Tibial artery (tissue), 4 donors: ENCODE measurements at regions of chr3 and their contacts with region 1.

Region 1: DNA sequence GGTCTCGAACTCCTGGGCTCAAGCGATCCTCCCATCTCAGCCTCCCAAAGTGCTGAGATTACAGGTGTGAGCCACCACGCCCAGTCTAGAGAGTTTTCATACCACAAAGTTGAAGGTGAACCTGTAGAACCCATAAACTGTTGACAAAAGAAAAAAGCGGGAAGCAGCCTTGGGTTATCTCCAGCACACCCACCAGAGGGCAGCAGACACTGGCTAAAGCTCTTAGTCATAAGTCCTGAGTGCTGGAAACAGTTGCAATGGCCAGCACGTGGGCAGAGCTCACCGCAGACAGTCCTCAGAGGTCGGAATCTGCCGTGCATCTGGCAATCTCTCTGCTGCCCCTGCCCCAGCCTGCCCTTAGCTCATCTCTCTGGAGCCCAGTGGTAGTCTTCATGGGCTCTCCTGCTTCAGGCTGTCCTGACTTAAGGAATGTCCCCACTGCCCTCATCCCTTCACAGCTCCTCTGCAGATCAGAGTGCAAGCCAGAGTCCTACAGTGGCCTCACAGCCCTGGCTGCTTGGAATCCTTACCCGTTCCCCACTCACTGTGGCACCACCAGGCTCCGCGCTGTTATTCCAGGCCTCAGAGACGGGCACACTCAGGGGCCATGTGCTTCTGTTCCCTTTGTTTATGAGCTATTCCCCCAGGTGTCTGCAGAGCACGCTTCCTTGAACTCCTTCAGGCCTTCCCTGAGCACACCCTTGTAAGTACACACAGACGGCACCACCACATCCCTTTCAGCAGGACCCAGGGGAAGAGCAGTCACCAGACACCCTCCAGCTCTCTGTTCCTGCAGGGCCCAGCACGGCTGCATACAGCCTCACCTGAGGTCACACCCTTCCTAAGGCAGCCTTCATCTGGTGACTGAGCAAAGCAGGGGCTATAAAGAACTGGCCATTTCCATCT is 8.8 kb upstream of the ELP6 start:
- DNase-seq: peak; percentile 77 to 87
- H3K4me3 ChIP-seq: no peak overlapping the region
- H3K27ac ChIP-seq: no peak overlapping the region
- H3K4me1 ChIP-seq: peaks cover 0 to 8% (median 2%) of the 10 kb centered on the region in 4 donors
- H3K27me3 ChIP-seq: no peaks in the 10 kb centered on the region
- CTCF ChIP-seq: peak; percentile 85 to 95

Region 2: DNA sequence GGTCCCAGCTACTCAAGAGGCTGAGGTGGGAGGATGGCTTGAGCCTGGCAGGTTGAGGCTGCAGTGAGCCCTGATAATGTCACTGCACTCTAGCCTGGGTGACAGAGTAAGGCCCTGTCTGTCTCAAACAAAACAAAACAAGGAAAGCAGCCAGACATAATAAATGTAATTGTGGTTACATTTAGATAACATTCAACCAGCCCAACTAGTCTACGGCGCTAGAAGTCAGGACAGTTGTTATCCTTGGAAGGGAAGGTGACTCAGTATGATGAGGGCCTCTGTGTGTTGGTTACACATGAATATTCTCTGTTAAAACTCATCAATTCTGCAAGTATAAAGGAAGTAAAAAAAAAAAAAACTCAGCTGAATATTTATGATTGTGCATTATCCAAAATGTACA is 83.3 kb after region 1 on chr3:
- intact Hi-C with region 1: no loop called
- DNase-seq: no peak
- H3K4me3 ChIP-seq: no peak overlapping the region
- H3K27ac ChIP-seq: no peak overlapping the region
- H3K4me1 ChIP-seq: peaks cover 0 to 8% (median 4%) of the 10 kb centered on the region in 4 donors
- H3K27me3 ChIP-seq: no peaks in the 10 kb centered on the region
- CTCF ChIP-seq: no peak

Region 3: GRCh38 chr3:47791193-47791855 is 269.0 kb after region 1 on chr3:
- intact Hi-C with region 1: loop called (anchors 2 kb)
- DNase-seq: no peak
- H3K4me3 ChIP-seq: no peak overlapping the region
- H3K27ac ChIP-seq: no peak overlapping the region
- H3K4me1 ChIP-seq: peaks cover 0 to 4% (median 0%) of the 10 kb centered on the region in 4 donors
- H3K27me3 ChIP-seq: no peaks in the 10 kb centered on the region
- CTCF ChIP-seq: no peak